HepG2 (cell line): ENCODE measurements at regions of chr6 and their contacts with region 1.

Region 1: DNA sequence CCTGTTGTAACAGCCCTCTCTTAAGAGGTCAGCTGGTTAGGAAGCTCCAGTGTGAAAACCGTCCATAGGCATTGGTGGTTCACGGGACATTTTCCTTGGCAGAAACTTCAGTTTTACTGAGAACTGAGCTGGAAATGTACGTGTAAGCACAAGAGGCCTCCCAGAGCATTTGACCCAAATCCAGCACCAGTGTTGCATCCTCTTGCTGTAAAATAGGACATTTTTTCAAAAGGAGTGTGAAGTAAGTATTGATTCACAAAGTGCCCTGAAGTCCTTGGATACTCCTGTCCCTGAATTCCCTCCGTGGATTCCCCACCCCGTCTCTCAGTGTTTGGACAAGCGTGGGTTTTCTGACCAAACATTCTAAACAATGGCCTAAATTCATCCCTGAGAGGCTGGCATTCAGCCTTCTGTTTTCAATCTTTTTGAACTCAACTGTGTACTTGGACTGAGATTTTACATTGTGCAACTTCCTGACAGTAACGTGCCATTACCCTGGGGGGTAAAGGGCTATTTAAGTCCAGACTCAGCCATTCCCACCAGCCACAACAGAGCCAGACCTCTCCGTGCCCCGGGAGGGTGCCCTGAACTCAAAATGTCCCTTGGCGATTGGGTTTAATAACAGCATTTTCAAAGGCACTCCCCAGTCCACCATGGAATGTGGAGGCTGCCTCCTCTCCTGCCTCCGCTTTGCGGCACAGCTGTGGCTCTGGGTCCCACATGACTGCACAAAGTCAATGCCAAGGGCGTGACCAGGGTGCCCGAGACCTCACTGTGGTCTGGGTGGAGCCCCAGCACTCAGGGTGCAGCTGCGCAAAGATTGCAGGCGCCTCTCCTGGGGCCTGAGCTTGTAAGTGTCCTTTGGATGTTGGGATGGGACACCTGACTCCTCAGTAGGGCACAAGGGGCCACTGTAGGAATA is 92.7 kb upstream of the AFDN start:
- DNase-seq: peak; percentile 99
- ATAC-seq: peak; percentile 85
- H3K4me3 ChIP-seq: peak overlapping the region in 1 of 3 experiments; percentile 47; a peak in 2 of 6 replicates
- H3K27ac ChIP-seq: peak overlapping the region; percentile 74
- H3K4me1 ChIP-seq: peaks cover 53% of the 10 kb centered on the region
- H3K27me3 ChIP-seq: no peaks in the 10 kb centered on the region
- CTCF ChIP-seq: peak; percentile 20; the same call in 1 of the 2 replicates
- EP300 ChIP-seq: peak; percentile 97 to 99
- POLR2A ChIP-seq: peak; percentile 34 to 82; a peak in 3 of 4 replicates
- RAD21 ChIP-seq: peak; percentile 55

Region 2: GRCh38 chr6:167501781-167502385 is 232.1 kb before region 1 on chr6:
- CTCF ChIA-PET with region 1: no interaction called
- POLR2A ChIA-PET with region 1: interaction called, 3 read pairs
- in situ Hi-C with region 1: no loop called
- intact Hi-C with region 1: loop called (anchors 1 kb)
- DNase-seq: peak; percentile 77
- ATAC-seq: peak; percentile 74
- H3K4me3 ChIP-seq: no peak overlapping the region
- H3K27ac ChIP-seq: no peak overlapping the region
- H3K4me1 ChIP-seq: peaks cover 89% of the 10 kb centered on the region
- H3K27me3 ChIP-seq: no peaks in the 10 kb centered on the region
- CTCF ChIP-seq: peak; percentile 93
- EP300 ChIP-seq: no peak
- POLR2A ChIP-seq: no peak
- RAD21 ChIP-seq: peak; percentile 98

Region 3: GRCh38 chr6:167559675-167560479 is 174.1 kb before region 1 on chr6:
- CTCF ChIA-PET with region 1: no interaction called
- POLR2A ChIA-PET with region 1: interaction called, 3 read pairs
- in situ Hi-C with region 1: no loop called
- intact Hi-C with region 1: loop called (anchors 5 kb)
- DNase-seq: peak; percentile 97
- ATAC-seq: peak; percentile 86
- H3K4me3 ChIP-seq: peak overlapping the region; percentile 35 to 67 (median 60); a peak in 5 of 6 replicates
- H3K27ac ChIP-seq: peak overlapping the region; percentile 81
- H3K4me1 ChIP-seq: peaks cover 47% of the 10 kb centered on the region
- H3K27me3 ChIP-seq: no peaks in the 10 kb centered on the region
- CTCF ChIP-seq: peak; percentile 23; the same call in 1 of the 2 replicates
- EP300 ChIP-seq: peak; percentile 62 to 85; a peak in 3 of 4 replicates
- POLR2A ChIP-seq: peak; percentile 63 to 72; a peak in 2 of 4 replicates
- RAD21 ChIP-seq: peak; percentile 56; the same call in 1 of the 2 replicates

Region 4: GRCh38 chr6:167676666-167677421 is 57.2 kb before region 1 on chr6:
- CTCF ChIA-PET with region 1: no interaction called
- POLR2A ChIA-PET with region 1: interaction called, 12 read pairs
- in situ Hi-C with region 1: no loop called
- intact Hi-C with region 1: loop called (anchors 1 kb)
- DNase-seq: peak; percentile 44
- ATAC-seq: peak; percentile 2; the same call in 1 of the 3 replicates
- H3K4me3 ChIP-seq: 0 out of 6 replicates have a peak overlapping the region, but pooled peaks of 1 of the 3 experiments have one; percentile 71
- H3K27ac ChIP-seq: peak overlapping the region; percentile 96
- H3K4me1 ChIP-seq: peaks cover 98% of the 10 kb centered on the region
- H3K27me3 ChIP-seq: no peaks in the 10 kb centered on the region
- CTCF ChIP-seq: no peak
- EP300 ChIP-seq: no peak
- POLR2A ChIP-seq: peak in 1 of 2 experiments; percentile 15; a peak in 1 of 4 replicates
- RAD21 ChIP-seq: no peak

Region 5: GRCh38 chr6:167683028-167683862 is 50.8 kb before region 1 on chr6:
- CTCF ChIA-PET with region 1: no interaction called
- POLR2A ChIA-PET with region 1: interaction called, 14 read pairs
- in situ Hi-C with region 1: no loop called
- intact Hi-C with region 1: loop called (anchors 1 kb)
- DNase-seq: peak; percentile 100
- ATAC-seq: peak; percentile 93
- H3K4me3 ChIP-seq: peak overlapping the region in 1 of 3 experiments; percentile 35; a peak in 2 of 6 replicates
- H3K27ac ChIP-seq: peak overlapping the region; percentile 96
- H3K4me1 ChIP-seq: peaks cover 77% of the 10 kb centered on the region
- H3K27me3 ChIP-seq: no peaks in the 10 kb centered on the region
- CTCF ChIP-seq: peak; percentile 33
- EP300 ChIP-seq: peak; percentile 99
- POLR2A ChIP-seq: peak in 1 of 2 experiments; percentile 42; a peak in 2 of 4 replicates
- RAD21 ChIP-seq: peak; percentile 70; the same call in 1 of the 2 replicates